Activated T-helper 1 cell treated with anti-CD3 and anti-CD28 coated beads, Interleukin-12 subunit alpha, Interleukin-12 subunit beta, Interleukin-2, Interleukin-4 antibody, amounts not matched to agents 30 ng/mL and 10 ng/mL and 1 ng/mL, durations not matched to agents 14 hours and 24 hours and 36 hours (primary cell): ENCODE measurements at regions of chr3 and their contacts with region 1.

Region 1: DNA sequence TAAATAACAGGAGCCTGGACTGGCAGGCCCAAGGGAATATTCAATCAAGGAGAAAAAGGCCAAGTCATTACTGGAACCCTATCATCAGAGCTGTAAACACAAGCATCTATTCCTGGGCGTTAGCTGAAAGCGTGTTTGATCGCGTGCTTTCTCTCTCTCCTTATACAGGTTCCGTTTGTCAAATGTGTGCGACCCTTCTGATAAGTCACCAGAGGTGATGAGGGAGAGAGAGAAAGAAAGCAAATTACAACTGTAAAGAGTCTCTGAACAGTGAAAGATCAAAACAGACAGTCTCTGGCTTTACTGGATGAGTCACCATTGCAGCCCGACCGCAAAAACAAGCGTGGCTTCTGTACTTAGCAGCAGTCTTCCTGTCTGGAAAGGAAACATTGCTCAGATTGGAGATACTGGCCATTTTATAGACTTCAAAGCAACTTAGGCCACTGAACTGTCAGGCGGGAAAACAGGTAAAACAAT is 39.5 kb upstream of the TPRG1 start:
- DNase-seq: peak; percentile 75
- H3K4me3 Mint-ChIP-seq: peak overlapping the region; percentile 69
- H3K27ac Mint-ChIP-seq: peak overlapping the region; percentile 76
- H3K4me1 Mint-ChIP-seq: peaks cover 28% of the 10 kb centered on the region
- H3K27me3 Mint-ChIP-seq: no peaks in the 10 kb centered on the region

Region 2: DNA sequence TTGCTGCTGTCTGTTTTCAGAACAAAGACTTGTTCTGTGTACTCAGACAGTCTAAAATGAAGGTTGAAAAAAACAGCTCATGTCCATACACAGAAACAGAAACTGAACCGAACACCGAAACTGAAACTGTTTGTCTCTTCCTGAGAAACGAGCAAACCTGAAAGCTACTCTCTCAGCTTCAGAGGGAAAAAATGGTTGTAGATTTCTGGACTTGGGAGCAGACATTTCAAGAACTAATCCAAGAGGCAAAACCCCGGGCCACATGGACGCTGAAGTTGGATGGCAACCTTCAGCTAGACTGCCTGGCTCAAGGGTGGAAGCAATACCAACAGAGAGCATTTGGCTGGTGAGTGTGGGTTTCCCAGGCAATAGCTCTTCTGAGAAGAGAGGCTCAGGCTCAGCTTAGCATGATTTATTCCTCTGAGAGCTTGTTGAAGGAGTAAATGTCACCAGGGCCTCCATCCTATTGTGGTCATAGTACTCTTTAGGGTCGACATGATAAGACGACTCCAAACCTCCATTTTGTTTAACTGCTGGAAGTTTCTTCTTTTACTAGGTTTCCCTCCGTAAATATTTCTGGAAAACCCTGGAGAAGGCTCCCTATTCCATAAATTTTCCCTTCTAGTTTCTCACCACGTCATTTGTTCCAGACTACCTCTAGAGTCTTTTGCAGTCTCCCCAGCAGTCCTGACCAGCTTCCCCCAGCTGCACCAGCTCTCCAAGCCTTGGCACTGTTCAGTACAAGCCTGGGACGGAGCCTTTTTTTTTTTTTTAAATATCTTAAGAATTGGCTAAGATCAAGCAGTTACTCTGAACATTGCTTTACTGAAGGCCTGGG is 1763.8 kb before region 1 on chr3 and contains the start of gene RTP4:
- intact Hi-C with region 1: loop called (anchors 5 kb)
- DNase-seq: peak; percentile 55
- H3K4me3 Mint-ChIP-seq: peak within 1 kb of the TSS; percentile 90
- H3K27ac Mint-ChIP-seq: peak within 1 kb of the TSS; percentile 98
- H3K4me1 Mint-ChIP-seq: peaks cover 42% of the 10 kb centered on the region
- H3K27me3 Mint-ChIP-seq: no peaks in the 10 kb centered on the region
- total RNA-seq, gene RTP4: 3.4 and 4.0 TPM in 2 replicates

Region 3: GRCh38 chr3:188720636-188721035 is 411.6 kb before region 1 on chr3:
- intact Hi-C with region 1: loop called (anchors 1 kb)
- DNase-seq: no peak
- H3K4me3 Mint-ChIP-seq: no peak overlapping the region
- H3K27ac Mint-ChIP-seq: no peak overlapping the region
- H3K4me1 Mint-ChIP-seq: peaks cover 35% of the 10 kb centered on the region
- H3K27me3 Mint-ChIP-seq: peaks cover 2% of the 10 kb centered on the region

Region 4: DNA sequence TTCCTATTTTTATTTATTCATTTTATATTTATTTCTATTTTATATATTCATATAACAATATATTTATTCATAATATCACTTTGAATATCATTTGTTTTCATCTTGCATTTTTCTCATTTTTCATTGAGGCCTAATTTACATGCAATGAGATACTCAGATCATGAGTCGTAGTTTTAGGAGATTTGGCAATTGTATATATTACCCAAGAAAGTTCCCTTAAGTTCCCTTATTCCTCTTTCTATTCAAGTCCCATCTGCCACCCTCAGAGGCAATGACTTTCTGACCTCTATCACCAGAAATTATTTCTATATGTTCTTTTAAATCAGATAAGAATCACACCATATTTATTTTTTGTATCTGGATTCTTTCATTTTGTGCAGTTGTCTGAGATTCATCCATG is 289.6 kb before region 1 on chr3:
- intact Hi-C with region 1: no loop called
- DNase-seq: no peak
- H3K4me3 Mint-ChIP-seq: no peak overlapping the region
- H3K27ac Mint-ChIP-seq: no peak overlapping the region
- H3K4me1 Mint-ChIP-seq: no peaks in the 10 kb centered on the region
- H3K27me3 Mint-ChIP-seq: no peaks in the 10 kb centered on the region

Region 5: GRCh38 chr3:189013224-189013888 is 118.9 kb before region 1 on chr3:
- intact Hi-C with region 1: loop called (anchors 1 kb)
- DNase-seq: no peak
- H3K4me3 Mint-ChIP-seq: no peak overlapping the region
- H3K27ac Mint-ChIP-seq: peak overlapping the region; percentile 27
- H3K4me1 Mint-ChIP-seq: peaks cover 22% of the 10 kb centered on the region
- H3K27me3 Mint-ChIP-seq: peaks cover 23% of the 10 kb centered on the region

Region 6: DNA sequence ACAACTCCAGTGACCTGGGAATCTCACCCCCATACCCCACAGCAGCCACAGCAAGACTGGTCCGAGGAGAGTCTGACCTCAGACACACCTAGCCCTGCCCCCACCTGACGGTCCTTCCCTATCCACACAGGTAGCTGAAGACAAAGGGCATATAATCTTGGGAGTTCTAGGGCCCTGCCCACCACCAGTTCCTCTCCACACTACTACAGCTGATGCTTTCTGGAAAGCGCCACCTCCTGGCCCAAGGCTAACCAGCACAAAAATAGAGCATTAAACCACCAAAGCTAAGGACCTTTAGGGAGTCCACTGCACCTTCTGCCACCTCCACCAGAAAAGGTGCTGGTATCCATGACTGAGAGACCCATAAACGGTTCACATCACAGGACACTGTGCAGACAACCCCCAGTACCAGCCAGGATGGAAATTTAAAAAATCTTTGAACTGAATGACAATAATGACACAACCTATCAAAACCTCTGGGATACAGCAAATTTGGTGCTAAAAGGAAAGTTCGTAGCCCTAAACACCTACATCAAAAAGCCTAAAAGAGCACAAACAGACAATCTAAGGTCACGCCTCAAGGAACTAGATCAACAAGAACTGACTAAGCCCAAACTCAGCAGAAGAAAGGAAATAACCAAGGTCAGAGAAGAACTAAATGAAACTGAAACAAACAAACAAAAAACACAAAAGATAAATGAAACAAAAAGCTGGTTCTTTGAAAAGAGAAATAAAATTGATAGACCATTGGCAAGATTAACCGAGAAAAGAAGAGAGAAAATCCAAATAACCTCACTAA is 82.6 kb before region 1 on chr3:
- intact Hi-C with region 1: loop called (anchors 1 kb)
- DNase-seq: peak; percentile 12
- H3K4me3 Mint-ChIP-seq: peak overlapping the region; percentile 32
- H3K27ac Mint-ChIP-seq: peak overlapping the region; percentile 83
- H3K4me1 Mint-ChIP-seq: peaks cover 55% of the 10 kb centered on the region
- H3K27me3 Mint-ChIP-seq: peaks cover 2% of the 10 kb centered on the region